ENCODE measurements at regions of chr6 and their contacts with region 1.

Region 1: GRCh38 chr6:3337521-3338350 is 79.0 kb downstream of the PSMG4 start:
- DNase-seq: peak; percentile 77 to 86 (median 82)
- ATAC-seq: peak; percentile 82
- H3K4me3 ChIP-seq: no peak overlapping the region
- H3K27ac ChIP-seq: peak overlapping the region; percentile 71
- H3K4me1 ChIP-seq: peaks cover 10 to 41% of the 10 kb centered on the region in 2 experiments
- H3K27me3 ChIP-seq: no peaks in the 10 kb centered on the region
- CTCF ChIP-seq: peak; percentile 22 to 58 (median 54); a peak in 5 of 6 replicates
- EP300 ChIP-seq: peak; percentile 52; the same call in 1 of the 2 replicates
- POLR2A ChIP-seq: no peak
- RAD21 ChIP-seq: peak in 1 of 2 experiments; percentile 6; a peak in 2 of 4 replicates

Region 2: DNA sequence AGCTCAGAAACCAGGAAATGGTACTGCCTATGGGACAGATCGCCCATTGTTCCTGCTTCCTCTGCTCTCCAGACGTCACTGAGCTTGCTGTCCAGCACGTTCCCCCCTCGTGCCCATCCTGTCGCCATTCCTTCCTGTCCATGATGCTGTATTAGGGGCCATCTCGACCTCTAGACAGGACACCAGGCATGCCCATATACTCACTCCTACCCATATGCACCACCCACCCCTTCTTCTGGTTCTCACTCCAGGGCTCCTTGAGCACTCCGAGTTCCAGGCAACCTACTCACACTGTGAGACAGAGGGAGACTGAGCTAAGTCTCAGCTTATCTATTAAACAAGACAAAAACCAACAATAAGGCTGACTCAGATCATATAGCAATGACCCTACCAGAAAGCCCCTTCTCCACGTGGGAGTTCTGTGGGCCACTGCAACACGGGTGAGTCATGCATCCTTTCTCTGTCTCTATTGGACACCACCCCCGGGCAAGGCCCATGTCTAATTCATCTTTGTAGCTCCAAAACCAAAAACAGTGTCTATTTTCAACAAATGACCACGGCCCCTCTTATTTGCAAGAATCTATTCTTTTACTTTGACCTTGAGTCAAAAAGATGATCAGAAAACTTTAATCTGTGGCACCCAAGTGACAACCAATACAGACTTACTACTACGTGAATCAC is 13.3 kb before region 1 on chr6:
- CTCF ChIA-PET with region 1: no interaction called
- POLR2A ChIA-PET with region 1: interaction called, 35 read pairs
- in situ Hi-C with region 1: no loop called
- intact Hi-C with region 1: no loop called
- DNase-seq: peak; percentile 88 to 92 (median 91)
- ATAC-seq: peak; percentile 90
- H3K4me3 ChIP-seq: no peak overlapping the region
- H3K27ac ChIP-seq: peak overlapping the region; percentile 64; the same call in 2 of the 3 replicates
- H3K4me1 ChIP-seq: peaks cover 26 to 29% of the 10 kb centered on the region in 2 experiments
- H3K27me3 ChIP-seq: no peaks in the 10 kb centered on the region
- CTCF ChIP-seq: no peak
- EP300 ChIP-seq: peak; percentile 62; the same call in 1 of the 2 replicates
- POLR2A ChIP-seq: no peak
- RAD21 ChIP-seq: peak in 1 of 2 experiments; percentile 20; a peak in 1 of 4 replicates

Region 3: GRCh38 chr6:3350252-3350796 is 12.6 kb after region 1 on chr6:
- CTCF ChIA-PET with region 1: no interaction called
- POLR2A ChIA-PET with region 1: interaction called, 22 read pairs
- in situ Hi-C with region 1: no loop called
- intact Hi-C with region 1: loop called (anchors 2 kb)
- DNase-seq: peak in 1 of 4 experiments; percentile 43
- ATAC-seq: no peak
- H3K4me3 ChIP-seq: no peak overlapping the region
- H3K27ac ChIP-seq: no peak overlapping the region
- H3K4me1 ChIP-seq: peaks cover 47 to 77% of the 10 kb centered on the region in 2 experiments
- H3K27me3 ChIP-seq: no peaks in the 10 kb centered on the region
- CTCF ChIP-seq: no peak
- EP300 ChIP-seq: no peak
- POLR2A ChIP-seq: no peak
- RAD21 ChIP-seq: no peak

Region 4: GRCh38 chr6:3356056-3356761 is 18.5 kb after region 1 on chr6:
- CTCF ChIA-PET with region 1: no interaction called
- POLR2A ChIA-PET with region 1: interaction called, 22 read pairs
- in situ Hi-C with region 1: no loop called
- intact Hi-C with region 1: loop called (anchors 2 kb)
- DNase-seq: peak; percentile 78 to 96 (median 94)
- ATAC-seq: peak; percentile 60
- H3K4me3 ChIP-seq: peak overlapping the region; percentile 14; the same call in 1 of the 2 replicates
- H3K27ac ChIP-seq: peak overlapping the region; percentile 96
- H3K4me1 ChIP-seq: peaks cover 30 to 56% of the 10 kb centered on the region in 2 experiments
- H3K27me3 ChIP-seq: no peaks in the 10 kb centered on the region
- CTCF ChIP-seq: no peak
- EP300 ChIP-seq: 0 out of 2 replicates have a peak, but pooled peaks have one; percentile 17
- POLR2A ChIP-seq: no peak
- RAD21 ChIP-seq: no peak

Region 5: DNA sequence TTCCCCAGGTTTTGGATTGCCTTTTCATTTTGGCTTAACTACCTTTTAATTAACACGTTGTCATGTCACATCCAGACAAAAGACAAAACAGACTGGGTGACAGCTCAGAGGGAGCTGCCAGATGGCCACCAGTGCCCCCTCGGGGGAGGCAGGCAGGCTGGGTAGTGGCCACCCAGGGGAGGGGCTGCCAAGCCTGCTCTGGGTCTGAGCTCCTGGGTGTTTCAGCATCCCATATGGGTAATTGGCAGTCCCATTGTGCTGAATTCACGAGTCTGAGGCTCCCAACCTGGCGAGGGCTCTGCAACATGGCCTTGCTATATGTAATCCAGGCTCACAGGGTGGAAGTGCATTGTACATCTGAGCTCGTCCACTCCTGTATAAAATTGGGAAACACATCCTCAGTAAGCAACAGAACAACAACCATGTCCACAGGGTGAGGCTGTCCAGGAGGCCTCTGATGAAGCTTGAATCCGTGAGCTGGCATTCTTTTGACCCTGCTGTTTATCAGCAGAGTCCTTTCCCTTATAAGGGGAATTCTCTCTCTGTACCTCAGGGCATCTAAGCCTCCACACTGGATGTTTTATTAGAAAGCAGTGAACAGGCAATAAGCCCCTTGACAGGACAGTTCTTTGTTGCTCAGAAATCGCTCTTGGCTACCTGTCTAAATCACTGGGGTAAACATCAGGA is 230.8 kb after region 1 on chr6:
- CTCF ChIA-PET with region 1: no interaction called
- POLR2A ChIA-PET with region 1: no interaction called
- in situ Hi-C with region 1: no loop called
- intact Hi-C with region 1: no loop called
- DNase-seq: no peak
- ATAC-seq: no peak
- H3K4me3 ChIP-seq: no peak overlapping the region
- H3K27ac ChIP-seq: no peak overlapping the region
- H3K4me1 ChIP-seq: peaks cover 0 to 5% of the 10 kb centered on the region in 2 experiments; a peak in 3 of 5 replicates
- H3K27me3 ChIP-seq: peaks cover 42 to 65% of the 10 kb centered on the region in 2 experiments
- CTCF ChIP-seq: no peak
- EP300 ChIP-seq: no peak
- POLR2A ChIP-seq: no peak
- RAD21 ChIP-seq: no peak

Measured in K562 (cell line).